CD8-positive, alpha-beta T cell (primary cell): ENCODE measurements at regions of chr4 and their contacts with region 1.

Region 1: GRCh38 chr4:36523182-36523581 is 241.8 kb downstream of the DTHD1 start:
- DNase-seq: no peak
- ATAC-seq: no peak
- H3K4me3 ChIP-seq: no peak overlapping the region
- H3K4me3 Mint-ChIP-seq: no peak overlapping the region
- H3K27ac ChIP-seq: no peak overlapping the region
- H3K27ac Mint-ChIP-seq: no peak overlapping the region
- H3K4me1 ChIP-seq: no peaks in the 10 kb centered on the region
- H3K4me1 Mint-ChIP-seq: no peaks in the 10 kb centered on the region
- H3K27me3 ChIP-seq: no peaks in the 10 kb centered on the region
- H3K27me3 Mint-ChIP-seq: no peaks in the 10 kb centered on the region
- CTCF ChIP-seq: no peak

Region 2: GRCh38 chr4:35247047-35247446 is 1276.1 kb before region 1 on chr4:
- CTCF ChIA-PET with region 1: no interaction called
- POLR2A ChIA-PET with region 1: no interaction called
- intact Hi-C with region 1: loop called in 1 of 2 experiments (anchors 5 kb)
- DNase-seq: no peak
- ATAC-seq: no peak
- H3K4me3 ChIP-seq: no peak overlapping the region
- H3K4me3 Mint-ChIP-seq: no peak overlapping the region
- H3K27ac ChIP-seq: no peak overlapping the region
- H3K27ac Mint-ChIP-seq: no peak overlapping the region
- H3K4me1 ChIP-seq: no peaks in the 10 kb centered on the region
- H3K4me1 Mint-ChIP-seq: no peaks in the 10 kb centered on the region
- H3K27me3 ChIP-seq: no peaks in the 10 kb centered on the region
- H3K27me3 Mint-ChIP-seq: no peaks in the 10 kb centered on the region
- CTCF ChIP-seq: no peak

Region 3: DNA sequence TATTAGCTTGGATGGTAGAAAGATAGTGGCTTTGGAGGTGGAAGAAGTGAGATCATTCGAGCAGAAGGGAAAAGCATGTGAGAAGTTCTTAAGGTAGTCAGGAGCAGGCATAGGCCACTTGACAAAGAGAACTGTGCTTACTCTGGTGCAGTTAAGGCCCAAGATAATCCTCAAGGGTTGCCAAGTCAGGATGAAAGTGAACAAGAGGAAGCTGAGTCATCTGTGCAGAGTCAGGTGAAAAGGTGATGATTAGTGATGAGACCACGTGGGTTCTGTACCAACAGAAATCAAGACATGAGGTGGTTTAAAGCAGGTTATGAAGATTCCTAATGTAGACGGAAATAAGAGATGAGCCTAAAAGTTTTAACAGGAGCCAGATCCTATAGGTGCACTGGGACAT is 128.1 kb after region 1 on chr4:
- CTCF ChIA-PET with region 1: no interaction called
- POLR2A ChIA-PET with region 1: no interaction called
- intact Hi-C with region 1: no loop called
- DNase-seq: no peak
- ATAC-seq: no peak
- H3K4me3 ChIP-seq: no peak overlapping the region
- H3K4me3 Mint-ChIP-seq: no peak overlapping the region
- H3K27ac ChIP-seq: no peak overlapping the region
- H3K27ac Mint-ChIP-seq: no peak overlapping the region
- H3K4me1 ChIP-seq: no peaks in the 10 kb centered on the region
- H3K4me1 Mint-ChIP-seq: no peaks in the 10 kb centered on the region
- H3K27me3 ChIP-seq: no peaks in the 10 kb centered on the region
- H3K27me3 Mint-ChIP-seq: peaks cover under 1% of the 10 kb centered on the region
- CTCF ChIP-seq: no peak